Naive thymus-derived CD4-positive, alpha-beta T cell (primary cell): ENCODE measurements at regions of chr6 and their contacts with region 1.

Region 1: DNA sequence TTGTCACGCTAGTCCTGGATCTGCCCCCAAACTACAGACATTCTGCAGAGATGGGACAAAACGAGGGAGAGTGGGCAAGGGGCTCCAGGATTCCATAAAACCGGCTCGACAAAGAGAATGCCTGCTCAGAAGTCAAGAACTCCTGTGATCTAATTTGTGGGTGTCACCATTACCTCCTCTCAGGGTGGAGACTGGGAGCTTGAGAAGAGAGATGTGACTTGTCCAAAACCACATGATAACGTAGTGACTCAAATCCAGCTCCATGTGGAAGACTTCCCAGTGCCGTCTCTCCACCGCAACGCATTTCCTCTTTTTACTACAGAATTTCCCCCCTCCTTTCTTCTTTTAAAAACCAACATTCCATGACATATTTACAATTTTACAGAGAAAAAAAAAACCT is 44.3 kb downstream of the TRERF1 start:
- DNase-seq: no peak
- ATAC-seq: peak; percentile 53
- H3K4me3 ChIP-seq: no peak overlapping the region
- H3K4me3 Mint-ChIP-seq: peak overlapping the region in 2 of 10 donors; percentile 4
- H3K27ac ChIP-seq: peak overlapping the region; percentile 19
- H3K27ac Mint-ChIP-seq: peak overlapping the region in 8 of 9 donors; percentile 6 to 88 (median 43)
- H3K4me1 ChIP-seq: peaks cover 30 to 43% of the 10 kb centered on the region in 2 donors
- H3K4me1 Mint-ChIP-seq: peaks cover 55 to 92% (median 78%) of the 10 kb centered on the region in 7 donors
- H3K27me3 ChIP-seq: no peaks in the 10 kb centered on the region
- H3K27me3 Mint-ChIP-seq: no peaks in the 10 kb centered on the region

Region 2: DNA sequence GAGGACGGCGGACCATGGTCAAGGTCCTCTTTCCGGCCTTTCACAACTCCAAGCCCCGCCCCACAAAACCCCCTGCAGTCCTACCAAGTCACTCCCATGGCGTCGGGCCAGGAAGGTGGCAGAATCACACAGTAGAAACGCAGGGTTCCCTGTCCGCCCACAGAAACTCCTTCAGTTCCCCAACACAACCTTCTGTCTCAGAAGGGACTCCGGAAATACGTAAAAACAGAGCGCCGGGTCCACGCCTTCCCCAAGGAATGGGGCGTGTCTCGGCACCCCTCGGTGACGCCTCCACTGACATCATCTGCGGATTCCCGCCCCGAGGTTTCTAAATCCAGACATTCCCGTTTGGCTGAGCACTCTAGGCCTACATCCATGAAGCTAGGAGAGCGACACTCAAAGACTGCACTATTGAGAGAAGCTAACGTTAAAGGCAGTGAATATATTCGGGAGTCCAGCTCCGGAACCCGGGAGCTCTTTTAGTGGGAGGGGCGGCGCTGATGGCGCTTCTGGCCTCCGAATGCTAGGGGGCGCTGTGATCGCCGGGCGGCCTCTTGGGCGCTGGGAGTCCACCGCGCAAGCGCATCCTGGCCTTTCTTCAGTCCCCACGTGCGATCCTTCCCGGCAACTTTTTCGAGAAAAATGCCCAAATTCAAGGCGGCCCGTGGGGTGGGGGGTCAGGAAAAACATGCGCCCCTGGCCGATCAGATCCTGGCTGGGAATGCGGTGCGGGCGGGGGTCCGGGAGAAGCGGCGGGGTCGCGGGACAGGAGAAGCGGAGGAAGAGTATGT is 486.3 kb before region 1 on chr6 and contains the starts of genes BYSL and MED20:
- CTCF ChIA-PET with region 1: no interaction called
- POLR2A ChIA-PET with region 1: no interaction called
- intact Hi-C with region 1: no loop called
- DNase-seq: peak; percentile 93 to 99 (median 96)
- ATAC-seq: peak; percentile 96
- H3K4me3 ChIP-seq: peak within 1 kb of the TSS; percentile 76
- H3K4me3 Mint-ChIP-seq: peak within 1 kb of the TSS; percentile 95 to 100 (median 99)
- H3K27ac ChIP-seq: peak within 1 kb of the TSS; percentile 95
- H3K27ac Mint-ChIP-seq: peak within 1 kb of the TSS; percentile 94 to 100 (median 99)
- H3K4me1 ChIP-seq: peaks cover 20 to 24% of the 10 kb centered on the region in 2 donors
- H3K4me1 Mint-ChIP-seq: peaks cover 27 to 58% (median 50%) of the 10 kb centered on the region in 7 donors
- H3K27me3 ChIP-seq: no peaks in the 10 kb centered on the region
- H3K27me3 Mint-ChIP-seq: peaks cover 0 to 3% (median 0%) of the 10 kb centered on the region in 5 donors
- total RNA-seq, gene BYSL: 3.9 to 35.7 (median 8.1) TPM
- total RNA-seq, gene MED20: 4.5 to 21.7 (median 9.4) TPM

Region 3: GRCh38 chr6:42251911-42252637 is 155.3 kb before region 1 on chr6:
- CTCF ChIA-PET with region 1: no interaction called
- POLR2A ChIA-PET with region 1: no interaction called
- intact Hi-C with region 1: no loop called
- DNase-seq: no peak
- ATAC-seq: no peak
- H3K4me3 ChIP-seq: no peak overlapping the region
- H3K4me3 Mint-ChIP-seq: no peak overlapping the region
- H3K27ac ChIP-seq: no peak overlapping the region
- H3K27ac Mint-ChIP-seq: no peak overlapping the region
- H3K4me1 ChIP-seq: no peaks in the 10 kb centered on the region
- H3K4me1 Mint-ChIP-seq: no peaks in the 10 kb centered on the region
- H3K27me3 ChIP-seq: no peaks in the 10 kb centered on the region
- H3K27me3 Mint-ChIP-seq: no peaks in the 10 kb centered on the region

Region 4: GRCh38 chr6:42417641-42418112 is 10.3 kb after region 1 on chr6:
- CTCF ChIA-PET with region 1: interaction called, 6 read pairs
- POLR2A ChIA-PET with region 1: interaction called, 6 read pairs
- intact Hi-C with region 1: loop called in 1 of 2 experiments (anchors 1 kb)
- DNase-seq: peak in 6 of 9 donors; percentile 16 to 40 (median 30)
- ATAC-seq: peak; percentile 86
- H3K4me3 ChIP-seq: peak overlapping the region; percentile 29
- H3K4me3 Mint-ChIP-seq: peak overlapping the region in 9 of 10 donors; percentile 43 to 75 (median 62)
- H3K27ac ChIP-seq: no peak overlapping the region
- H3K27ac Mint-ChIP-seq: peak overlapping the region in 6 of 9 donors; percentile 68 to 84 (median 77)
- H3K4me1 ChIP-seq: peaks cover 26 to 29% of the 10 kb centered on the region in 2 donors
- H3K4me1 Mint-ChIP-seq: peaks cover 43 to 91% (median 75%) of the 10 kb centered on the region in 7 donors
- H3K27me3 ChIP-seq: no peaks in the 10 kb centered on the region
- H3K27me3 Mint-ChIP-seq: no peaks in the 10 kb centered on the region

Region 5: DNA sequence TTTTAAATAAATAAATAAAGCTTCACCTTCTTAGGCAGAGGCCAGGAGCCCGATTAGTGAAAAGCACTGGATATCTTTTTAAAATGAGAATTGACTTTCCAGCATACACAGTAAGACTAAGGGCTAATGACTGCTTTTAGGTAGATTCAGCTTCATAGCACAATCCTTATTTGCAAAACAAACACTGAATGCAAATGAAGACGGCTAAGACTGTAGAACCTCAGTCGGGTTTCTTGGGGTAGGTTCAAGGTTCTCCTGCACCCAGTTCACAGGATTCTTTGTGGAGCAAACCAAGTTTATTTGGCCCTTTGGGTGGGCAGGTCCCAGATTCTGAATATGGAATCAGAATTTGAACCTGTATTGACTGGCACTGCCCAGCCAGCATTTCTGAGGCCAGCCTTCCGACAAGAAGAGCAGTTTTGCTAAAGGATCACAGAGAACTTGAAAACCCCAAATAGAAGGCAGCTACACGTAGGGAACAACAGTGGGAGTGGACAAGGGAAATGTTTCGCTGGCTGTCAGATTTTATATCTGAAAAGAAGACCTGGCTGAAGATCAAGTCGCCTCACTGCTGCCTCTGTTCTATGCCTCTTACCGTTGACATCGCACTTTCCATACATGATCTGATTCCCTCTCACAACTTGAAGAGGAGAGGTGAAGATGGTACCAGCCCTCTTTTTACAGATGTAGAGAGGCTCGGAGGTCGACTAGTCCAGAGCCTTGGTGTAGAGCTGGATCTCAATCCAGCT is 36.1 kb after region 1 on chr6:
- CTCF ChIA-PET with region 1: no interaction called
- POLR2A ChIA-PET with region 1: no interaction called
- intact Hi-C with region 1: no loop called
- DNase-seq: no peak
- ATAC-seq: no peak
- H3K4me3 ChIP-seq: peak overlapping the region; percentile 23
- H3K4me3 Mint-ChIP-seq: peak overlapping the region in 9 of 10 donors; percentile 29 to 79 (median 54)
- H3K27ac ChIP-seq: peak overlapping the region; percentile 16
- H3K27ac Mint-ChIP-seq: peak overlapping the region in 8 of 9 donors; percentile 58 to 93 (median 80)
- H3K4me1 ChIP-seq: peaks cover 38 to 42% of the 10 kb centered on the region in 2 donors
- H3K4me1 Mint-ChIP-seq: peaks cover 41 to 99% (median 85%) of the 10 kb centered on the region in 7 donors
- H3K27me3 ChIP-seq: no peaks in the 10 kb centered on the region
- H3K27me3 Mint-ChIP-seq: no peaks in the 10 kb centered on the region